BJ (cell line): ENCODE measurements at regions of chr1 and their contacts with region 1.

Region 1: DNA sequence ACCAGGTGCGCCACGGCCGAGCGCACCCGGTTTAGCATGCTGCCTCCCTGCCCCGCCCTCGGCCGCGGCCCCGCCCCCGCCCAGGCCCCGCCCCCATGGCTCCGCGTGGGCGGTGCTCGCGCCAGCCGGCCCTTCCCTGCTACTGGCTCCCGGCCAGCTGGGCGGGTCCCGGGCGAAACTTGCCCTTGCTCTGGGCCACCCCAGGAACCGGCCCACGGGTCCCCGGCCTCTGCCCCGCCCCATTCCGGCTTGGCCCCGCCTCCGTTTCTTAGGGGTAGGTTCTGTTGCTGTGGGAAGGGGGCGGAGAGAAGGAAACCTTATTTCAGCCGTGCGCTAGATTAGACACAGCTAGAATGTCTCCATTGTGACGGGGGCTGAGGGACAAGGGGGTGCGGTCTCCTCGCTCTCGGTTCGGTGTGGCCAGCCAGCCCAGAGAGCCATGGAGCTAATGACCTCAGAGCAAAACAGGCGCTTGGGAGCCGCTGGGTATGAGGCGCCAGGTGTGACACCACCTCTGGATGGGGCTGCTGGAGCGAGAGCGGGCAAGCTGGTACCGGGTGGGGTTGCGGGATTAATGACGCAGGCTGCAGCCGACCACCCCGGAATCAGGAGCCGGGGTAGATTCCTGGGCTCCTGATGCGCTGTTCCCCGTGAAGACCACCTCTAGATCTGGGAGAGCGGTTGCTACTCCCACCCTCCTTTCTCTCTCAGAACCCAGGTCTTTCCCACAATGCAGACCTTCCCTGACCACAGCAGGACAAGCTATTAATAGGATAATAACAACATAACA is at the start of gene PPM1J:
- DNase-seq: no peak
- H3K4me3 ChIP-seq: peak within 1 kb of the TSS; percentile 61
- H3K27me3 ChIP-seq: no peaks in the 10 kb centered on the region; the same call in 1 of the 2 replicates
- CTCF ChIP-seq: no peak
- polyA plus RNA-seq, gene PPM1J: 0.67 and 1.4 TPM in 2 replicates

Region 2: GRCh38 chr1:112665857-112666256 is 49.6 kb before region 1 on chr1:
- CTCF ChIA-PET with region 1: no interaction called
- POLR2A ChIA-PET with region 1: no interaction called
- DNase-seq: no peak
- H3K4me3 ChIP-seq: no peak overlapping the region
- H3K27me3 ChIP-seq: no peaks in the 10 kb centered on the region
- CTCF ChIP-seq: no peak

Region 3: GRCh38 chr1:112729909-112730308 is 14.4 kb after region 1 on chr1:
- CTCF ChIA-PET with region 1: interaction called, 24 read pairs
- POLR2A ChIA-PET with region 1: no interaction called
- DNase-seq: no peak
- H3K4me3 ChIP-seq: no peak overlapping the region
- H3K27me3 ChIP-seq: no peaks in the 10 kb centered on the region
- CTCF ChIP-seq: no peak

Region 4: GRCh38 chr1:112744009-112744578 is 28.6 kb after region 1 on chr1:
- CTCF ChIA-PET with region 1: interaction called, 160 read pairs
- POLR2A ChIA-PET with region 1: no interaction called
- DNase-seq: no peak
- H3K4me3 ChIP-seq: peak overlapping the region; percentile 22
- H3K27me3 ChIP-seq: peaks cover 7% of the 10 kb centered on the region
- CTCF ChIP-seq: peak; percentile 83

Region 5: DNA sequence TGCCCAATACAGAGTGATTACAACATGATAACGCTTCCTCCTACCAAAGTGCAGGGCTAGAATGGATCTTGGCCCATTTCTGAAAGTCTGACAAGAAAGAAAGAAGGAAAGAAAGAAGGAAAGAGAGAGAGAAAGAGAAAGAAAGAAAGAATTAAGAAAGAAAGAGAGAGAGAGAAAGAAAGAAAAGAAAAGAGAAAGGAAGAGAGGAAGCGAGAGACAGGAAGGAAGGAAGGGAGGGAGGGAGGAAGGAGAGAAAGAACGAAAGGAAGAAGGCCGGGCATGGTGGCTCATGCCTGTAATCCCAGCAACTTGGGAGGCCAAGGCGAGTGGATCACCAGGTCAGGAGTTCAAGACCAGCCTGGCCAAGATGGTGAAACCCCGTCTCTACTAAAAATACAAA is 43.8 kb after region 1 on chr1:
- CTCF ChIA-PET with region 1: interaction called, 11 read pairs
- POLR2A ChIA-PET with region 1: no interaction called
- DNase-seq: no peak
- H3K4me3 ChIP-seq: no peak overlapping the region
- H3K27me3 ChIP-seq: no peaks in the 10 kb centered on the region
- CTCF ChIP-seq: no peak

Region 6: GRCh38 chr1:113042285-113043143 is 327.1 kb after region 1 on chr1:
- CTCF ChIA-PET with region 1: interaction called, 24 read pairs
- POLR2A ChIA-PET with region 1: no interaction called
- DNase-seq: peak; percentile 57
- H3K4me3 ChIP-seq: no peak overlapping the region
- H3K27me3 ChIP-seq: no peaks in the 10 kb centered on the region
- CTCF ChIP-seq: peak; percentile 67